ENCODE measurements at regions of chr9 and their contacts with region 1.

Region 1: DNA sequence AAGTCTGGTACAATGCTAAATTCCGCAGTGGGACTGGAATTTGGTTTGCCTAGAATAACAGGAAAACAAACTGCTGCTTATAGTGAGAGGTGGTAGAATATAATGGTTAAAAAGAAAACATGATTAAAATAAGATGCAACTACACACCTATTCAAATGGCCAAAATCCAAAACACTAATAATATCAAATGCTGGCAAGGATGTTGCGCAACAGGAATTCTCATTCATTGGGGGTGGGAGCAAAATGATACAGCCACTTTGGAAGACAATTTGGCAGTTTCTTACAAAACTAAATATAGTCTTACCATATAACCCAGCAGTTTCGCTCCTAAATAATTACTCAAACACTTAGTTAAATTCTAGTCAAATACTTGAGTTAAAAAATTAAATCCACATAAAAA is 50.8 kb upstream of the TPD52L3 start:
- DNase-seq: no peak
- ATAC-seq: no peak
- H3K4me3 ChIP-seq: no peak overlapping the region
- H3K4me3 Mint-ChIP-seq: no peak overlapping the region
- H3K27ac ChIP-seq: no peak overlapping the region
- H3K27ac Mint-ChIP-seq: no peak overlapping the region
- H3K4me1 ChIP-seq: no peaks in the 10 kb centered on the region
- H3K4me1 Mint-ChIP-seq: no peaks in the 10 kb centered on the region
- H3K27me3 ChIP-seq: no peaks in the 10 kb centered on the region
- H3K27me3 Mint-ChIP-seq: peaks cover 3% of the 10 kb centered on the region
- CTCF ChIP-seq: no peak

Region 2: DNA sequence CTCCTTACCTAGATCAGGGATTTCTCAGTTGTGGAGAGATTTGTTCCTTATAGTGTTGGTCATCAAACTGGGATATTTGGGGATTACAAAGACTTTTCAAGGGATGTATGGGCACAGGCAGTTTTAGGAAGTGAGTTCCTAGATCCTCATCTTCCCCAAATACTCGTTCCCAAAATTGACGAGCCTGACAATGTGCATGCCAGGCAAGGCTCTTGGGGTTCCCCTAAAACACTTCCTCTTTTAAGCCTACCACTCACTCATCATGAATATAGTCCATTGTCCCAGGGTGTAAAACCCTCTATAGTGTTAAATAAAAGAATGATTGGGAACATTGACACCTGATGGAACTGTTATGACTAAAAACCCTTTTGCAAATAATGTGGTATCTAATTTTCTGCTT is 740.7 kb before region 1 on chr9:
- CTCF ChIA-PET with region 1: no interaction called
- POLR2A ChIA-PET with region 1: no interaction called
- intact Hi-C with region 1: no loop called
- DNase-seq: peak in 1 of 9 experiments; percentile 26
- ATAC-seq: no peak
- H3K4me3 ChIP-seq: no peak overlapping the region
- H3K4me3 Mint-ChIP-seq: no peak overlapping the region
- H3K27ac ChIP-seq: no peak overlapping the region
- H3K27ac Mint-ChIP-seq: no peak overlapping the region
- H3K4me1 ChIP-seq: peaks cover 8% of the 10 kb centered on the region
- H3K4me1 Mint-ChIP-seq: peaks cover 15% of the 10 kb centered on the region
- H3K27me3 ChIP-seq: no peaks in the 10 kb centered on the region
- H3K27me3 Mint-ChIP-seq: no peaks in the 10 kb centered on the region
- CTCF ChIP-seq: no peak

Region 3: GRCh38 chr9:6226696-6227095 is 50.7 kb before region 1 on chr9:
- CTCF ChIA-PET with region 1: no interaction called
- POLR2A ChIA-PET with region 1: interaction called, 3 read pairs
- intact Hi-C with region 1: loop called in 1 of 2 experiments (anchors 5 kb)
- DNase-seq: no peak
- ATAC-seq: no peak
- H3K4me3 ChIP-seq: no peak overlapping the region
- H3K4me3 Mint-ChIP-seq: no peak overlapping the region
- H3K27ac ChIP-seq: no peak overlapping the region
- H3K27ac Mint-ChIP-seq: no peak overlapping the region
- H3K4me1 ChIP-seq: no peaks in the 10 kb centered on the region
- H3K4me1 Mint-ChIP-seq: no peaks in the 10 kb centered on the region
- H3K27me3 ChIP-seq: peaks cover 2 to 4% of the 10 kb centered on the region in 2 experiments
- H3K27me3 Mint-ChIP-seq: peaks cover 5% of the 10 kb centered on the region
- CTCF ChIP-seq: no peak

Measured in CD8-positive, alpha-beta T cell (primary cell).